Activated B cell treated with CpG ODN at 0.5 μM for 24 hours (primary cell): ENCODE measurements at regions of chrX and their contacts with region 1.

Region 1: DNA sequence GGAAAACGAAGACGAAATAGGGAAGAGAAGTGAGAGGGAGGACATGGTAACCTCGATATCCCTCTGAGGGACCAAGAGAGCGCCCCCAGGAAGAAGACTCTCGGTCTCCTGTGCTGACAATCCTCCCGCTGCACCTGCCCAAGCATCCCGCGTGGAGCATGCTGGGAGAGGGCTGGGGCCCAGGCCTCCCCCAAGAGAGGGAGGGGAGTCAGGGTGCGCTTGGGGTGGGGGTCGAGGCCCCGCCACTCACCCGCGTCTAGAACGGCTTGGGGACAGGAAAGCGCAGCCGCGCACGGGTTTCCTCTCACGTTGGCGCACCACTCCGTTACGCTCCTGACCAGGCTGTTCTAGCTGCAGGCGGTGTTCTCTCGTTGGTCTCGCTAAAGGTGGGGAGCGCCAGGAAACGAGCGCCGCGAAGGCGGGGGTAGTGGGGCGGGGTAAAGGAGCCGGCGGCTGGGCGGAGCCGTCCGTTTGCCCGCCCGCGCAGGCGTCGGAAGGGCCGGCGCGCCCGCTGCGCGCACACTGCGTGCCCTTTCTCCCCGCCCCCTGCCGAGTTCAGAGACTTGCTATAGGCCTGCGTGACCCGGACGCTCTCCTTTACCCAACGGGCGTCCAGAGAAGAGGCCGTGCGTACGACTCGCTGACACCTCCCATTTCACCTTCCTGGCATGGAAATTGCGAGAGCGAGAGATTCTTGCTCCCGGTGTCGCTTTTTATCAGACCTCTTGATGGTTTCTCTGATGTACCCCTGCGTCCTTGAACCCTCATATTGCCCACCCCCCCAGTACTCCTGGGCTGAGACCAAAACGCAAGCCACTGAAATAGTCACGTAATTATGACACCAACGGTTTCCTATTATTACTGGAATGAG is at the start of gene C1GALT1C1:
- DNase-seq: peak; percentile 80
- ATAC-seq: peak; percentile 92
- H3K4me3 Mint-ChIP-seq: peak within 1 kb of the TSS; percentile 93
- H3K27ac Mint-ChIP-seq: peak within 1 kb of the TSS; percentile 97
- H3K4me1 Mint-ChIP-seq: peaks cover 8% of the 10 kb centered on the region
- H3K27me3 Mint-ChIP-seq: no peaks in the 10 kb centered on the region
- CTCF ChIP-seq: no peak
- total RNA-seq, gene C1GALT1C1: 8.2 and 8.7 TPM in 2 replicates

Region 2: DNA sequence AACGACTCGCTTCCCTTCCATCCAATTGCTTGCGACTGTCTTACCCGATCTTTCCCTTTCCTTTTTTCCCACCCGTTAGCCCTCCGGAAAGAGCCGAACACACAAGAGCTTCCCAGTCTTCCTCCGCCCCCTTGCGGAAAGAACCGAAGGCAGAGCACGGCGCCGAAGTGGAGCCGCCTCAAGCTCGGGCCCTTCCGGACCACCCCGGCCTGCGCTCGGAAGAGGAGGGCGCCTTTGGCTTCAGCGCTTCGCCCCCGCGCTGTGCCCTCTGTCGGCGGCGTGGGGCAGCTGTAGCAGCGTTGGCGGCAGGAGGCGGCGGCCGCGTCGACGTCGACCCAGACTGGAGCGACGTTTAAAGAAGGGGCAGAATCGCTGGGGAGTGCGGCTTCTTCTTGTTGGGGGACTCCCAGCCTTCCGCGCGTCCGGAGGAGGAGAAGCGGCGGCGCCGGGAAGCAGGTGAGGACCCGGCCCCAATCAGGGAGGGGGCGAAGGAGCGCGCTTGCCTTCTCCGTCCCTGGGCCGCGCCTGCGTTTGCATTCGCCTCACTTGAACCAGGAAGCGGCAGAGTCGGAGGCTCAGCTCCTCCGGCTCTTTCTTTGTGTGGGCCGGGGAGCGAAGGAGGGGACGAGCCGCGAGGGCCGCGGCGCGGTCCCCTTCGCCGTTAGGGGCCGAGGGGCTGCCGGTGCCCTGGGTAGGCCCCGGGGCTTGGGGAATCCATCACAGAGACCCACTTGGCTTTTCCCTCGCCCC is 379.2 kb before region 1 on chrX and contains the start of gene ZBTB33:
- CTCF ChIA-PET with region 1: no interaction called
- POLR2A ChIA-PET with region 1: no interaction called
- intact Hi-C with region 1: loop called (anchors 10 kb)
- DNase-seq: peak; percentile 74
- ATAC-seq: peak; percentile 99
- H3K4me3 Mint-ChIP-seq: peak within 1 kb of the TSS; percentile 93
- H3K27ac Mint-ChIP-seq: peak within 1 kb of the TSS; percentile 93
- H3K4me1 Mint-ChIP-seq: peaks cover 14% of the 10 kb centered on the region
- H3K27me3 Mint-ChIP-seq: no peaks in the 10 kb centered on the region
- CTCF ChIP-seq: no peak
- total RNA-seq, gene ZBTB33: 17.4 and 19.8 TPM in 2 replicates

Region 3: GRCh38 chrX:120499301-120500072 is 130.4 kb before region 1 on chrX:
- CTCF ChIA-PET with region 1: no interaction called
- POLR2A ChIA-PET with region 1: no interaction called
- intact Hi-C with region 1: loop called (anchors 1 kb)
- DNase-seq: no peak
- ATAC-seq: no peak
- H3K4me3 Mint-ChIP-seq: no peak overlapping the region
- H3K27ac Mint-ChIP-seq: no peak overlapping the region
- H3K4me1 Mint-ChIP-seq: peaks cover 3% of the 10 kb centered on the region
- H3K27me3 Mint-ChIP-seq: no peaks in the 10 kb centered on the region
- CTCF ChIP-seq: no peak

Region 4: GRCh38 chrX:120512627-120513026 is 117.3 kb before region 1 on chrX:
- CTCF ChIA-PET with region 1: no interaction called
- POLR2A ChIA-PET with region 1: no interaction called
- intact Hi-C with region 1: no loop called
- DNase-seq: no peak
- ATAC-seq: no peak
- H3K4me3 Mint-ChIP-seq: no peak overlapping the region
- H3K27ac Mint-ChIP-seq: no peak overlapping the region
- H3K4me1 Mint-ChIP-seq: no peaks in the 10 kb centered on the region
- H3K27me3 Mint-ChIP-seq: no peaks in the 10 kb centered on the region
- CTCF ChIP-seq: no peak

Region 5: DNA sequence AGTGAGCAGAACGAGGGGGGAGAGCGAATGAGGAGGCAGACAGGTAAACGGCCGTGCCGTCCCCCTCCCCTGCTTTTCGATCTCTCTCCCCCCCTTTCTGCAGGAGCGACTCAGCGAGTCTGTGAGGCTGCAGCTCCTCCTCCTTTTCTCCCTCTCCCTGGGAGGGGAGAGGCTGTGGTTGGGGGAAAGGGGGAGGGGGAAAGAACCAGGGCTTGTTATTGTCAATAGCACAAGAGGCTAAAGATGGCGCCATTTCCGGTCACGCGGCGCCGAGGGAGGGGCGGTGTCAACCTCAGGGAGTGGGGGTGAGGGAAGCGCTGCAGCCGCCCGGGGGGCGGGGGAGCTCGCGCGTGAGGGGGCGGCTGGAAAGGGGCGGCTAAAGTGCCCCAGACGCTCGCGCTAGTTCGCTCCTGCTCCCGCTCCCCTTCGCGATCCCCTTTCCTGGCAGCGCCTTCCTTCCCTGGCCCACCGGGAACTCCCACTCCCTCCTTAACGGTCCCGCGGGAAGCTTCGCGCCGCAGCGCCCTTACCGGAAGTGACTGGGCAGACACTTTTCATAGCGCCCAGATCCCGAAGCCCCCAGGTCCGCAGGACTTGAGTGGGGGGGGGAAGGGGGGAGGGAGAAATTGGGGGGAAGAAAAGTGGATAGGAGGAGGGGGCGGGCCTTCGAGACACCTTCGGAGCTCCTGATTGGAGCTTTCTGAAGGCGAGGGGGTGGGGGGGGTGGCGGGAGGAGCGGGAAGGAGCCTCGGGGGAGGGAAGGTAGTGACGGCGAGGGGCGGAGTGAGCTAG is 68.9 kb before region 1 on chrX and contains the start of gene CUL4B:
- CTCF ChIA-PET with region 1: no interaction called
- POLR2A ChIA-PET with region 1: interaction called, 63 read pairs
- intact Hi-C with region 1: loop called (anchors 1 kb)
- DNase-seq: peak; percentile 78
- ATAC-seq: peak; percentile 87
- H3K4me3 Mint-ChIP-seq: peak within 1 kb of the TSS; percentile 93
- H3K27ac Mint-ChIP-seq: peak within 1 kb of the TSS; percentile 96
- H3K4me1 Mint-ChIP-seq: peaks cover 36% of the 10 kb centered on the region
- H3K27me3 Mint-ChIP-seq: no peaks in the 10 kb centered on the region
- CTCF ChIP-seq: no peak
- total RNA-seq, gene CUL4B: 35.0 and 35.9 TPM in 2 replicates

Region 6: GRCh38 chrX:120603707-120604360 is 26.1 kb before region 1 on chrX and contains the start of gene MCTS1:
- CTCF ChIA-PET with region 1: no interaction called
- POLR2A ChIA-PET with region 1: interaction called, 22 read pairs
- intact Hi-C with region 1: loop called (anchors 1 kb)
- DNase-seq: peak; percentile 52
- ATAC-seq: peak; percentile 91
- H3K4me3 Mint-ChIP-seq: peak within 1 kb of the TSS; percentile 93
- H3K27ac Mint-ChIP-seq: peak within 1 kb of the TSS; percentile 94
- H3K4me1 Mint-ChIP-seq: peaks cover 8% of the 10 kb centered on the region
- H3K27me3 Mint-ChIP-seq: no peaks in the 10 kb centered on the region
- CTCF ChIP-seq: no peak
- total RNA-seq, gene MCTS1: 45.1 and 49.8 TPM in 2 replicates

Region 7: GRCh38 chrX:120769576-120770341 is 139.9 kb after region 1 on chrX:
- CTCF ChIA-PET with region 1: no interaction called
- POLR2A ChIA-PET with region 1: no interaction called
- intact Hi-C with region 1: loop called (anchors 1 kb)
- DNase-seq: no peak
- ATAC-seq: no peak
- H3K4me3 Mint-ChIP-seq: no peak overlapping the region
- H3K27ac Mint-ChIP-seq: no peak overlapping the region
- H3K4me1 Mint-ChIP-seq: peaks cover 2% of the 10 kb centered on the region
- H3K27me3 Mint-ChIP-seq: no peaks in the 10 kb centered on the region
- CTCF ChIP-seq: no peak